ENCODE measurements at regions of chr18 and their contacts with region 1.

Region 1: DNA sequence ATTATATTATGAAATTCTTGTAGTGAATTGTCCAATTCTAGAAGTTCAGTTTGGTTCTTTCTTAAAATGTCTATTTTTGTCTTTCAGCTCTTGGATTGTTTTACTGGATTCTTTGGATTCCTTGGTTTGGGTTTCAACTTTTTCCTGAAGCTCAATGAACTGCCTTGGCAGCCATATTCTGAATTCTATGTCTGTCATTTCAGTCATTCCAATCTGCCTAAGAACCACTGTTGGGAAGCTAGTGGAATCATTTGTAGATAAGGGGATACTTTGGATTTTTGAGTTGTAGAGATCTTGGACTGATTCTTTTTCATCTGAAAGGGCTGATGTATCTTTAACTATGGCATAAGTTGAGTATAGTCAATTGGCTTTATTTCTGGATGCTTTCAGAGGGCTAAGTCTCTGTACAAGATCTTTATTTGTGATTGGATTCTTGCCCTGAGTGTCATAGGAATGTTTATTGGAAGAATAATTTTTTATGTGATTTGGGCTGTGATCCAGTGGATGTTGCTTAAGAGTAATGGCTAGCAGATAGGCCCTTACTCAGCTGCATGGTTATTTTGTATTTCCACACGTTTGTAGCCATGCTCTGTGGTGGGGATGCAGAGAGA is 42.3 kb downstream of the SERPINB7 start:
- DNase-seq: no peak
- H3K4me3 ChIP-seq: no peak overlapping the region
- H3K27ac ChIP-seq: peak overlapping the region in 3 of 4 donors; percentile 22 to 70 (median 59)
- H3K4me1 ChIP-seq: peaks cover 2 to 45% (median 42%) of the 10 kb centered on the region in 4 donors
- H3K27me3 ChIP-seq: no peaks in the 10 kb centered on the region
- CTCF ChIP-seq: no peak
- EP300 ChIP-seq: no peak
- POLR2A ChIP-seq: no peak

Region 2: GRCh38 chr18:63098018-63098981 is 719.2 kb before region 1 on chr18:
- intact Hi-C with region 1: loop called (anchors 5 kb)
- DNase-seq: no peak
- H3K4me3 ChIP-seq: no peak overlapping the region
- H3K27ac ChIP-seq: peak overlapping the region in 1 of 4 donors; percentile 37
- H3K4me1 ChIP-seq: peaks cover 0 to 29% (median 27%) of the 10 kb centered on the region in 4 donors
- H3K27me3 ChIP-seq: no peaks in the 10 kb centered on the region
- CTCF ChIP-seq: no peak
- EP300 ChIP-seq: no peak
- POLR2A ChIP-seq: no peak

Region 3: GRCh38 chr18:63617049-63617914 is 200.3 kb before region 1 on chr18:
- intact Hi-C with region 1: loop called (anchors 10 kb)
- DNase-seq: no peak
- H3K4me3 ChIP-seq: no peak overlapping the region
- H3K27ac ChIP-seq: peak overlapping the region in 2 of 4 donors; percentile 38 to 53
- H3K4me1 ChIP-seq: peaks cover 0 to 19% (median 10%) of the 10 kb centered on the region in 4 donors
- H3K27me3 ChIP-seq: no peaks in the 10 kb centered on the region
- CTCF ChIP-seq: no peak
- EP300 ChIP-seq: peak in 1 of 4 donors; percentile 41
- POLR2A ChIP-seq: no peak

Region 4: DNA sequence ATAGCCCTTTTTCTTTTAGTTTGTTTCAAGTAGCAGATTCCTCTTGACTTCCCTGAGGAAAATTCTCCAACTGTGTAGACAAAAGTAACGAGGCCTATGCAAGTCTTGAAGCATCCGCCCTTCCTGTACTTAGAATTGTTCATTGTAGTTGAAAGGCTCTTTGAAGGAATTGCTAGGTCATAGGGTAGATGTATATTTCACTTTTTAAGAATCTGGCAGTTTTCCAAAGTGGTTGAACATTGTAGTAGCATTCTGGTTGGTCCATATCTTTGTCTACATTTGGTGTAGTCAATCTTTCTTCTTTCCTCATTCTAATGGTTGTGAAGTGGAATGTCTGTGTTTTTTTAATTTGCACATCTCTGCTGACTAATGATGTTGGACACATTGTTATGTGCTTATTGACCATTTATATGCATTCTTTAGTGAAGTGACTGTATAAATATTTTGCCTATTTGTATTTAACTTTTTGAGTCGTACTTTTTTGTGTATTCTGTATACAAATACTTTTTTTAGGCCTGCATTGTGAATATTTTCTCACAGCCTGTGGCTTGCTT is 120.4 kb before region 1 on chr18:
- intact Hi-C with region 1: no loop called
- DNase-seq: no peak
- H3K4me3 ChIP-seq: no peak overlapping the region
- H3K27ac ChIP-seq: no peak overlapping the region
- H3K4me1 ChIP-seq: no peaks in the 10 kb centered on the region
- H3K27me3 ChIP-seq: no peaks in the 10 kb centered on the region
- CTCF ChIP-seq: no peak
- EP300 ChIP-seq: no peak
- POLR2A ChIP-seq: no peak

Region 5: DNA sequence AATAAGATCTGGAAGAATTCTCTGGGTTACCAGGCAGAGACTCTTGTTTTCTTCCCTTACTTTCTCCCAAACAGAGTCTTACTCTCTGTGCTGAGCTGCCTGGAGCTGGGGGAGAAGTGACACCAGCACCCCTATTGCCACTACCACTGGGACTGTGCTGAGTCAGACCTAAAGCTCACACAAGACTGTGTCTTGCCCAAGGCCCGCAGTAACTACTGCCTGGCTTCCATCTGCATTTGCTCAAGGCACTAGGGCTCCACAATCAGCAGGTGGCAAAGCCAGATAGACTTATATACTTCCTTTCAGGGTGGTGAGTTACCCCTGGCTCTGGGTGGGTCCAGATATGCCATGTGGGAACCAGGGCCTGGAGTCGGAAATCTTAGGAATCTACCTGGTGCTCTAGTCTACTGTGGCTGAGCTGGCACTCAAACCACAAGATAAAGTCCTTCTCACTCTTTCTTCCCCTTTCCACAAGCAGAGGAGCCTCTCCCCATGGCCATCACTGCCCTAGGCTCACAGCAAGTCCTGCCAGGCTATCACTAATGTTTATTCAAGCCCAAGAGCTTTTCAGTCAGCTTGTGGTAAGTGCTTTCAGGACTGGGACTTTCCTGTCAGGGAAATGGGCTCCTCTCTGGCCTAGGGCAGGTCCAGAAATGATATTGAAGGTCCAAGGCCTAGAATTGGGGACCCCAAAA is 42.4 kb after region 1 on chr18:
- intact Hi-C with region 1: no loop called
- DNase-seq: no peak
- H3K4me3 ChIP-seq: no peak overlapping the region
- H3K27ac ChIP-seq: no peak overlapping the region
- H3K4me1 ChIP-seq: no peaks in the 10 kb centered on the region
- H3K27me3 ChIP-seq: no peaks in the 10 kb centered on the region
- CTCF ChIP-seq: no peak
- EP300 ChIP-seq: no peak
- POLR2A ChIP-seq: no peak